MCF 10A (cell line): ENCODE measurements at regions of chr3 and their contacts with region 1.

Region 1: DNA sequence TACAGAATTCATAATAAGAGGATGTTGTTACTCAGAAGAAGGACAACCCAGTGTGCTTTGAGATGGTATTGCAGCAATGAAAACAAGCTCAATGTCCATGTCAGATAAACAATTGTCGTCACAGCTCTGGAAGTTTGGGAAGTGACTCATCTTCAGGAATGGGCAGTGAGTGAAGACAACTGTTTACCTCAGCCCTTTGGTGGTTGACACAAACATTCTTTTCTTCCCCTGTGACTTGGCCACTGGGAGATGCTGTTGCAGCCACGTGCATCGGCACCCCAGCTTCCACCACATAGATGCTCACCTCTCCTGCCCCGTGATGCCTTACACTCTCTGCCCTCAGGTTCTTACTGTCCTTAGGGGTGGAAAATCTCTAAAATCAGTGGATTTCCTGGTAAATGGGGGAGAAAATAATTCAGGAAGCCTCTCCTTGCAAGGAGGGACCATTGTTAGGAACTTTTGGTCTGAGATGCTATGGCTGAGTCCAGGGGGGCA is 114.1 kb upstream of the GALNT15 start:
- DNase-seq: peak; percentile 98
- H3K4me3 Mint-ChIP-seq: peak overlapping the region; percentile 30
- H3K27ac Mint-ChIP-seq: peak overlapping the region; percentile 96
- H3K4me1 Mint-ChIP-seq: peaks cover 66% of the 10 kb centered on the region
- H3K27me3 Mint-ChIP-seq: no peaks in the 10 kb centered on the region
- CTCF ChIP-seq: no peak

Region 2: DNA sequence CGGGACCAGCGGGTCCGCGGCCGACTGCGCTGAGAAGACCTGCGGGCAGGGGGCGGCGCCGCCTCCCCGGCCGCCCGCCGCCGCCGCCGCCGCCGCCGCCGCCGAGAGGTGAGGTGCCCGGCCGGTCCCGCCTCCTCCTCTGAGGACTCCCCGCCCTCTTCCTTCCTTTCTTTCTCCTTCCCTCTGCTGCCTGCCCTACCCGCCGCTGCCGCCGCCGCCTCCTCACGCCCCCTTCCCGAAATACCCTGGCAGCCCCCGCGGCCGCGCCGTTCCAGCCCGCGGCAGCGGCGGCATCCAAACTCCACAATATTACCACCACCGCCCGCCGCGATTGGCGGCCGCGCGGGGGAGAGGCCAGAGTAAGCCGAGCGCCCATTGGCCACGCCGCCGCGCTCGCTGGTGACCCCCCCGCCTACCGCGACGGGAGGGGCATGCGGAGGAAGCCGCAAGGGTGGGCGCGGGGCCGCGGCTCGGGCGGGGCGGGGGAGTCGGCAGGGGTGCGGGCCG is 200.8 kb before region 1 on chr3:
- CTCF ChIA-PET with region 1: interaction called, 3 read pairs
- POLR2A ChIA-PET with region 1: interaction called, 12 read pairs
- intact Hi-C with region 1: no loop called
- DNase-seq: peak; percentile 92
- H3K4me3 Mint-ChIP-seq: peak overlapping the region; percentile 93
- H3K27ac Mint-ChIP-seq: peak overlapping the region; percentile 93
- H3K4me1 Mint-ChIP-seq: peaks cover 21% of the 10 kb centered on the region
- H3K27me3 Mint-ChIP-seq: no peaks in the 10 kb centered on the region
- CTCF ChIP-seq: no peak

Region 3: GRCh38 chr3:15953841-15954240 is 106.6 kb before region 1 on chr3:
- CTCF ChIA-PET with region 1: no interaction called
- POLR2A ChIA-PET with region 1: no interaction called
- intact Hi-C with region 1: no loop called
- DNase-seq: peak; percentile 65
- H3K4me3 Mint-ChIP-seq: no peak overlapping the region
- H3K27ac Mint-ChIP-seq: no peak overlapping the region
- H3K4me1 Mint-ChIP-seq: no peaks in the 10 kb centered on the region
- H3K27me3 Mint-ChIP-seq: no peaks in the 10 kb centered on the region
- CTCF ChIP-seq: no peak

Region 4: GRCh38 chr3:16090024-16090423 is 29.6 kb after region 1 on chr3:
- CTCF ChIA-PET with region 1: interaction called, 3 read pairs
- POLR2A ChIA-PET with region 1: interaction called, 41 read pairs
- intact Hi-C with region 1: no loop called
- DNase-seq: peak; percentile 92
- H3K4me3 Mint-ChIP-seq: no peak overlapping the region
- H3K27ac Mint-ChIP-seq: no peak overlapping the region
- H3K4me1 Mint-ChIP-seq: peaks cover 6% of the 10 kb centered on the region
- H3K27me3 Mint-ChIP-seq: no peaks in the 10 kb centered on the region
- CTCF ChIP-seq: no peak

Region 5: DNA sequence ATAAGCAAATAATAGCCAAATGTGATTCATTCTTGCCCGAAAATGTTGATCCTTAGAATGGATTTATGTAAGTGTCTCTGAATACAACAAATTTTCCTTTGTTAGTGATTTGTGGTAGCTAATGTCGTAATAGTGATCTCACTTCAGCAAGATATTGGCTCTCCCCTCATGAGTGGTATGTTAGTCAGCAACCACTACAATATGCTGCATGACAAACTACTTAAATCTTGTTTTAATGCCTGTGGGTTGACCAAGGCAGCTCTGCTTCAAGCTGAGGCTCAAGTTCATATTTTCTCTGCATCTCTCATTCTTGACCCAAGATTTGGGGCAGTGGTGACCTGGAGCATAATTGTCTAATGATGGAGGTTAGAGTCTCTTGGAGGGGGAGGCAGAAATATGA is 64.2 kb after region 1 on chr3:
- CTCF ChIA-PET with region 1: no interaction called
- POLR2A ChIA-PET with region 1: interaction called, 3 read pairs
- intact Hi-C with region 1: loop called (anchors 2 kb)
- DNase-seq: peak; percentile 84
- H3K4me3 Mint-ChIP-seq: no peak overlapping the region
- H3K27ac Mint-ChIP-seq: peak overlapping the region; percentile 32
- H3K4me1 Mint-ChIP-seq: peaks cover 18% of the 10 kb centered on the region
- H3K27me3 Mint-ChIP-seq: no peaks in the 10 kb centered on the region
- CTCF ChIP-seq: no peak

Region 6: DNA sequence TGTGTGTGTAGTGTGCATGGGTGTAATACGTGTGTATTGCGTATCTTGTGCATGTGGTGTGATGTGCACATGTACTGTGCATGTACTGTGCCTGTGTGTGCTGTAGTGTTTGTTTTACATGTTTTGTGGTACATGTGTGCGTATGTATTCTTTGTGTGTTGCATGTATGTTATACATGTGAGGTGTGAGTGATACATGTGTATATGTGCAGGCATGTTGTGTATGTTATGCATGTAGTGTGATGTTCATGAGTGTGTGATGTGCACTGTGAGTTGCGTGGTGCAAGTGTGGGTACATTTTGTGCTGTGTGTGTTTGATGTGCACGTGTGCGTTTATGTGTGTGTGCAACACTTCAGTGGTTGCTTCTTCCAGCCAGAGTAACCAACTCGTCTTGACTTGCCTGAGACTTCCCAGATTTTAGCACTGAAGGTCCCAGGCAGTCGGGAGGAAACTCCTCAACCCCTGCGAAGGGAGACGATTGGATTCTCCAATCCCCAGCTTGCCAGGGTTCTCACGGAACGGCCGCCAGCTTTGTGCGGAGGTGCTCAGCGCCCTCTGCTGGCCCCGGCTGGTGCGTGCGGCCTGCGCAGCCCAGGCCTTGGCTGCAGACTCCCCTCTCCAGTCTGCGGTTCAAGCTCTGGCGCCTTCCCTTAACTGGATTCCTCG is 117.7 kb after region 1 on chr3:
- CTCF ChIA-PET with region 1: interaction called, 18 read pairs
- POLR2A ChIA-PET with region 1: interaction called, 26 read pairs
- intact Hi-C with region 1: loop called (anchors 1 kb)
- DNase-seq: peak; percentile 83
- H3K4me3 Mint-ChIP-seq: peak overlapping the region; percentile 73
- H3K27ac Mint-ChIP-seq: no peak overlapping the region
- H3K4me1 Mint-ChIP-seq: peaks cover 62% of the 10 kb centered on the region
- H3K27me3 Mint-ChIP-seq: no peaks in the 10 kb centered on the region
- CTCF ChIP-seq: peak; percentile 95

Region 7: GRCh38 chr3:16247276-16248061 is 187.1 kb after region 1 on chr3:
- CTCF ChIA-PET with region 1: interaction called, 15 read pairs
- POLR2A ChIA-PET with region 1: interaction called, 6 read pairs
- intact Hi-C with region 1: loop called (anchors 5 kb)
- DNase-seq: peak; percentile 89
- H3K4me3 Mint-ChIP-seq: no peak overlapping the region
- H3K27ac Mint-ChIP-seq: no peak overlapping the region
- H3K4me1 Mint-ChIP-seq: peaks cover 32% of the 10 kb centered on the region
- H3K27me3 Mint-ChIP-seq: no peaks in the 10 kb centered on the region
- CTCF ChIP-seq: peak; percentile 95